SK-N-SH (cell line): ENCODE measurements at regions of chr1 and their contacts with region 1.

Region 1: DNA sequence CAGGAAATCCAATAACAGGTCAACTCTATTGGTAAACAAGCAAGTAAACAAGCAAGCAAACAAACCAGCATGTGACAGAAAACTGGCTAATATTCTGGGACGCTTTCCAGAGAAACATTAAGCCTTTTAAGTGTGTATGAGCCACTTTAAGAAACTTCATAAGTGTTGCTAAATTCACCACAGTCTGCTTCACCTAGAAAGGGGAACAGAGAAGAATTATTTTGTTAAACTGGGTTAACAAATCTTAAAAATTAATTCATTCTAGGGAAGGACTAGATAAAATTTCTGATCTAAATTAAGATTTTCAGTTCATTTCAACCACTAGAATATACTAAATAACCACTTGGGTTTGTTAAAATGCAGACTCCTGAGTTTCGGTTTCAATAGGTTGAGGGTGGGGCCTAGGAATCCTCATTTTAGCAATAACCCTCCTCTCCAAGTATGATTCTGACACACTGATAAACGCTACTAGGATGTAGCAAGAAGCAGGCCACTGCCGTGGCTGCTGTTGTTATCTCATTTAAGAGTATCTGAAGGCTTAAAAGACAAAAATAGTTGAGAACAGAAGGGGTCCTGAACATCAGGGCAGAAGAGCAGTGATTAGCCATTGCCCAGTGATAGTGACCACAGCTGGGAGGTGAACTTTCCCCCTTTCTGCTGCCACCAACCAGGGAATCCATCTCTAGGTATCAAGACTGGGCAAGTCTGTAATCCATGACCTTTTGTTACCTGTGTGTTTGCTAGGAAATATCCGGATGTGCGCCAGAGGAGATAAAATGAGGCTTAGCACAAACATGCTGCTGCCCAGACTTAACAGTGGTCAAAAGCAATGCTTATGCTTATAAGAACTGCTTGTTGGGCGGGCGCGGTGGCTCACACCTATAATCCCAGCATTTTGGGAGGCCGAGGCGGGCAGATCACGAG is 11.2 kb downstream of the CREG1 start:
- DNase-seq: no peak
- H3K4me3 ChIP-seq: no peak overlapping the region
- H3K27ac ChIP-seq: no peak overlapping the region
- H3K4me1 ChIP-seq: peaks cover 0 to 2% of the 10 kb centered on the region in 2 experiments; a peak in 1 of 4 replicates
- H3K27me3 ChIP-seq: no peaks in the 10 kb centered on the region
- CTCF ChIP-seq: no peak
- EP300 ChIP-seq: no peak
- RAD21 ChIP-seq: no peak

Region 2: GRCh38 chr1:167401260-167401873 is 141.0 kb before region 1 on chr1:
- CTCF ChIA-PET with region 1: interaction called, 10 read pairs
- POLR2A ChIA-PET with region 1: no interaction called
- DNase-seq: peak; percentile 48
- H3K4me3 ChIP-seq: no peak overlapping the region
- H3K27ac ChIP-seq: no peak overlapping the region
- H3K4me1 ChIP-seq: no peaks in the 10 kb centered on the region; a peak in 2 of 4 replicates
- H3K27me3 ChIP-seq: no peaks in the 10 kb centered on the region
- CTCF ChIP-seq: peak; percentile 65
- EP300 ChIP-seq: no peak
- RAD21 ChIP-seq: peak; percentile 79

Region 3: GRCh38 chr1:167517535-167518330 is 24.6 kb before region 1 on chr1:
- CTCF ChIA-PET with region 1: interaction called, 13 read pairs
- POLR2A ChIA-PET with region 1: no interaction called
- DNase-seq: no peak
- H3K4me3 ChIP-seq: no peak overlapping the region
- H3K27ac ChIP-seq: no peak overlapping the region
- H3K4me1 ChIP-seq: no peaks in the 10 kb centered on the region
- H3K27me3 ChIP-seq: no peaks in the 10 kb centered on the region; the same call in 1 of the 2 replicates
- CTCF ChIP-seq: no peak
- EP300 ChIP-seq: no peak
- RAD21 ChIP-seq: no peak

Region 4: DNA sequence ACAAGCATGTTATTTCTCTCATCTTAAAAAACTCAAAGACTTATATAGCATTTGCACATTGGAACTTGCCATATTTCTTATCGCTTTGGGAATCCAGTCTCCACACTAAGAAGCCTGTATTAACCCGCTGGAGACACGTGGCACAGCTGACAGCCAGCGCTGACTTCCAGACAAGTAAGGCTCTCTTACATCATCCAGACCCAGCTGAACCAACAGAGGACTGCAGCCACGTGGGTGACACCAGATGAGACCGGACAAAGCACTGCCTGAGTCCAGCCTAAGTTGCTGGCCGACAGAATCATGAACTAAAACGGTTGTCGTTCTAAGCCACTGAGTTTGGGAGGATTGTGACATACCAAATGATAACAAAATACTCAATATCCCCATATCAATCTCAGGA is 17.7 kb before region 1 on chr1:
- CTCF ChIA-PET with region 1: interaction called, 37 read pairs
- POLR2A ChIA-PET with region 1: no interaction called
- DNase-seq: no peak
- H3K4me3 ChIP-seq: no peak overlapping the region
- H3K27ac ChIP-seq: no peak overlapping the region
- H3K4me1 ChIP-seq: no peaks in the 10 kb centered on the region
- H3K27me3 ChIP-seq: no peaks in the 10 kb centered on the region; the same call in 1 of the 2 replicates
- CTCF ChIP-seq: no peak
- EP300 ChIP-seq: no peak
- RAD21 ChIP-seq: no peak

Region 5: GRCh38 chr1:167553136-167554027 is 11.0 kb after region 1 on chr1 and contains the start of gene CREG1:
- CTCF ChIA-PET with region 1: interaction called, 84 read pairs
- POLR2A ChIA-PET with region 1: interaction called, 4 read pairs
- DNase-seq: peak; percentile 98
- H3K4me3 ChIP-seq: peak within 1 kb of the TSS; percentile 67 to 71
- H3K27ac ChIP-seq: peak within 1 kb of the TSS in 1 of 2 experiments; percentile 51; a peak in 2 of 4 replicates
- H3K4me1 ChIP-seq: peaks cover 0 to 8% of the 10 kb centered on the region in 2 experiments; a peak in 2 of 4 replicates
- H3K27me3 ChIP-seq: no peaks in the 10 kb centered on the region
- CTCF ChIP-seq: no peak
- EP300 ChIP-seq: no peak
- RAD21 ChIP-seq: no peak
- polyA plus RNA-seq, gene CREG1: 26.1 and 37.0 TPM in 2 replicates